ENCODE measurements at regions of chr4 and their contacts with region 1.

Region 1: GRCh38 chr4:2468445-2469192 is at the start of gene RNF4:
- DNase-seq: peak; percentile 94 to 95
- H3K4me3 ChIP-seq: peak within 1 kb of the TSS; percentile 74
- H3K4me3 Mint-ChIP-seq: peak within 1 kb of the TSS; percentile 95
- H3K27ac Mint-ChIP-seq: peak within 1 kb of the TSS; percentile 93
- H3K4me1 ChIP-seq: peaks cover 3% of the 10 kb centered on the region
- H3K4me1 Mint-ChIP-seq: no peaks in the 10 kb centered on the region
- H3K27me3 ChIP-seq: no peaks in the 10 kb centered on the region
- H3K27me3 Mint-ChIP-seq: no peaks in the 10 kb centered on the region
- CTCF ChIP-seq: no peak
- total RNA-seq, gene RNF4: 69.0 and 75.4 TPM in 2 replicates

Region 2: GRCh38 chr4:2220016-2220630 is 248.5 kb before region 1 on chr4:
- CTCF ChIA-PET with region 1: interaction called, 11 read pairs
- POLR2A ChIA-PET with region 1: no interaction called
- intact Hi-C with region 1: loop called (anchors 2 kb)
- DNase-seq: peak; percentile 69 to 79
- H3K4me3 ChIP-seq: no peak overlapping the region
- H3K4me3 Mint-ChIP-seq: no peak overlapping the region
- H3K27ac Mint-ChIP-seq: no peak overlapping the region
- H3K4me1 ChIP-seq: no peaks in the 10 kb centered on the region
- H3K4me1 Mint-ChIP-seq: peaks cover 9% of the 10 kb centered on the region
- H3K27me3 ChIP-seq: no peaks in the 10 kb centered on the region
- H3K27me3 Mint-ChIP-seq: no peaks in the 10 kb centered on the region
- CTCF ChIP-seq: peak; percentile 78 to 88

Region 3: DNA sequence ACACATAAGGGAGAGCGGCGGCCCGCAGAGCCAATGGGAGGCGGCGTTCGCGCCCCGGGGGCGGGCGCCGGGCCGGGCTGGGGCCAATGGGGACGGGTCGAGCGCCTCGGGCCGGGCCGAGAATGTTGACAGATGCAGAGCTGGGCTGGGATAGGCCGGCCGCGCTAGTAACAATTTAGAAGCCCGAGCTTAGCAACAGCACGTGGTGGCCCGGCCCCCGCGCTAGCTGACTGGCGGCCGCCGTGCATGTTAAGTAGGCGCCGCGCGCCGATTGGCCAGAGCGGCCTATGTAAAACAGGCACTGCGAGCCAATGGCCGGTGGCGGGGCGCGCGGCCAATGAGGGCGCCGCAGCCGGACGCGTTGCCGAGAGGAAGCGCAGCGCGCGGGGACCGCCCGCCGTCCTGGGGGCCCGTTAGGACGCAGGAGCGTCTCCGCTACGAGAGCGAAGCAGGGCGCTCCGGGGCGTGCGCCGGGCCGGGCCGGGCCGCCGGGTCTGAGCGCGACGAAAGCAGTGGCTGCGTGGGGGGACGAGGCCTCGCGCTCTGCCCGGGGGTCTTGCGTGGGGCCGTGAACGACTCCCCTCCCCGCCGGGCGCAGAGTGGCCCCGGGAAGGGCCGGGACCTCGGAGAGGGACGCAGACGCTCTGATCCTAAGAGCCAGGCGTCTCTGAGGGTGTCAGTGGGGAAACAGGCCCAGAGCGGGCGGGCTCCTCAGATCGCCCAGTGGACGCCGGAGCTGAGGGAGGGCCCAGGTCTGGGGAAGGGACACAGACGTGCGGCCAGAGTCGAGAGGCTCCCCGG is 206.3 kb before region 1 on chr4:
- CTCF ChIA-PET with region 1: interaction called, 3 read pairs
- POLR2A ChIA-PET with region 1: interaction called, 7 read pairs
- intact Hi-C with region 1: loop called (anchors 2 kb)
- DNase-seq: peak; percentile 98
- H3K4me3 ChIP-seq: peak overlapping the region; percentile 63
- H3K4me3 Mint-ChIP-seq: peak overlapping the region; percentile 72
- H3K27ac Mint-ChIP-seq: no peak overlapping the region
- H3K4me1 ChIP-seq: 0 out of 2 replicates have a peak, but pooled peaks cover 5% of the 10 kb centered on the region
- H3K4me1 Mint-ChIP-seq: no peaks in the 10 kb centered on the region
- H3K27me3 ChIP-seq: no peaks in the 10 kb centered on the region
- H3K27me3 Mint-ChIP-seq: no peaks in the 10 kb centered on the region
- CTCF ChIP-seq: no peak

Region 4: DNA sequence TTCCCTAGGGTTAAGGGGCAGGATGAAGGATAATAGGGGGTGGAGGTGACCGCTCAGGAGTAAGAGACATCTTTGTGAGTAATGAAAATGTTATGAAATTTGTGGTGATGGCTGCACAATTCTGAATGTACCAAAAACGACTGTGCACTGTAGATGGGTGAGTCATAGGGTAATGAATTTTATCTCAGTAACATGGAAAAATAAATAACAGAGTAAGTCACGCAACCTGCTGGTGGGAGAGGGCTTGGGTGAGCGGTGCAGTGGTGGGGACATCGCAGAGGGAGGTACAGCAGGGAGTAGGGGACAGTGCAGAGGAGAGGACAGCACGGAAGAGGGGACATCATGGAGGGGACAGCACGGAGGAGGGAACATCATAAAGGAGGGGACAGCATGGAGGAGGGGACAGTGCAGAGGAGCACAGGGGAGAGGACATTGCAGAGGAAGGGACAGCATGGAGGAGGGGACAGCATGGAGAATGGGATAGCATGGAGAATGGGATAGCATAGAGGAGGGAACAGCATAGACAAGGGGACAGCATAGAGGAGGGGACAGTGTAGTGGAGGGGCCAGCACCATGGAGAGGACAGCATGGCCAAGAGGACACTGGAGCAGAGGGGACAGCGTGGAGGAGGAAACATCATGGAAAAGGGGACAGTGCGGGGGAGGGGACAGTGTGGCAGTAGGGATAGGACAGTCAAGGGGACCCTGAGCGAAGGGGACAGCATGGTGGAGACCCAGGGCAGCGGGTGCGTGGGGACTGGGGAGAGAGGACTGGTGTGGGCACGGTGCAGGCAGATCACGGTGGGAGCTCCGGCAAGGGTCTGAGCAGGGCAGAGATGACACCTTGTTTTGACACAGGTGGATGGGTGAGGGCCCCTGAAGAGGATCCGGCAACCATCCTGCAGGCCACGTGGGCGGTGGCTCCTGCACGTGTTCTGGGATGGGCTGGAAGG is 138.3 kb before region 1 on chr4:
- CTCF ChIA-PET with region 1: no interaction called
- POLR2A ChIA-PET with region 1: no interaction called
- intact Hi-C with region 1: no loop called
- DNase-seq: no peak
- H3K4me3 ChIP-seq: no peak overlapping the region
- H3K4me3 Mint-ChIP-seq: no peak overlapping the region
- H3K27ac Mint-ChIP-seq: no peak overlapping the region
- H3K4me1 ChIP-seq: no peaks in the 10 kb centered on the region
- H3K4me1 Mint-ChIP-seq: peaks cover 12% of the 10 kb centered on the region
- H3K27me3 ChIP-seq: no peaks in the 10 kb centered on the region
- H3K27me3 Mint-ChIP-seq: no peaks in the 10 kb centered on the region
- CTCF ChIP-seq: no peak

Region 5: GRCh38 chr4:2361366-2362265 is 107.0 kb before region 1 on chr4:
- CTCF ChIA-PET with region 1: no interaction called
- POLR2A ChIA-PET with region 1: no interaction called
- intact Hi-C with region 1: no loop called
- DNase-seq: peak; percentile 15 to 31
- H3K4me3 ChIP-seq: no peak overlapping the region
- H3K4me3 Mint-ChIP-seq: no peak overlapping the region
- H3K27ac Mint-ChIP-seq: no peak overlapping the region
- H3K4me1 ChIP-seq: peaks cover 16% of the 10 kb centered on the region
- H3K4me1 Mint-ChIP-seq: no peaks in the 10 kb centered on the region
- H3K27me3 ChIP-seq: no peaks in the 10 kb centered on the region
- H3K27me3 Mint-ChIP-seq: no peaks in the 10 kb centered on the region
- CTCF ChIP-seq: no peak

Region 6: GRCh38 chr4:2536193-2537010 is 67.8 kb after region 1 on chr4 and contains the start of gene FAM193A:
- CTCF ChIA-PET with region 1: interaction called, 4 read pairs
- POLR2A ChIA-PET with region 1: interaction called, 22 read pairs
- intact Hi-C with region 1: no loop called
- DNase-seq: peak; percentile 99
- H3K4me3 ChIP-seq: peak within 1 kb of the TSS; percentile 92
- H3K4me3 Mint-ChIP-seq: peak within 1 kb of the TSS; percentile 88
- H3K27ac Mint-ChIP-seq: peak within 1 kb of the TSS; percentile 88
- H3K4me1 ChIP-seq: no peaks in the 10 kb centered on the region
- H3K4me1 Mint-ChIP-seq: no peaks in the 10 kb centered on the region
- H3K27me3 ChIP-seq: no peaks in the 10 kb centered on the region
- H3K27me3 Mint-ChIP-seq: no peaks in the 10 kb centered on the region
- CTCF ChIP-seq: no peak
- total RNA-seq, gene FAM193A: 28.7 and 31.2 TPM in 2 replicates

Measured in Caco-2 (cell line).